Right ventricle myocardium inferior (tissue), 1 donor: ENCODE measurements at regions of chr14 and their contacts with region 1.

Region 1: DNA sequence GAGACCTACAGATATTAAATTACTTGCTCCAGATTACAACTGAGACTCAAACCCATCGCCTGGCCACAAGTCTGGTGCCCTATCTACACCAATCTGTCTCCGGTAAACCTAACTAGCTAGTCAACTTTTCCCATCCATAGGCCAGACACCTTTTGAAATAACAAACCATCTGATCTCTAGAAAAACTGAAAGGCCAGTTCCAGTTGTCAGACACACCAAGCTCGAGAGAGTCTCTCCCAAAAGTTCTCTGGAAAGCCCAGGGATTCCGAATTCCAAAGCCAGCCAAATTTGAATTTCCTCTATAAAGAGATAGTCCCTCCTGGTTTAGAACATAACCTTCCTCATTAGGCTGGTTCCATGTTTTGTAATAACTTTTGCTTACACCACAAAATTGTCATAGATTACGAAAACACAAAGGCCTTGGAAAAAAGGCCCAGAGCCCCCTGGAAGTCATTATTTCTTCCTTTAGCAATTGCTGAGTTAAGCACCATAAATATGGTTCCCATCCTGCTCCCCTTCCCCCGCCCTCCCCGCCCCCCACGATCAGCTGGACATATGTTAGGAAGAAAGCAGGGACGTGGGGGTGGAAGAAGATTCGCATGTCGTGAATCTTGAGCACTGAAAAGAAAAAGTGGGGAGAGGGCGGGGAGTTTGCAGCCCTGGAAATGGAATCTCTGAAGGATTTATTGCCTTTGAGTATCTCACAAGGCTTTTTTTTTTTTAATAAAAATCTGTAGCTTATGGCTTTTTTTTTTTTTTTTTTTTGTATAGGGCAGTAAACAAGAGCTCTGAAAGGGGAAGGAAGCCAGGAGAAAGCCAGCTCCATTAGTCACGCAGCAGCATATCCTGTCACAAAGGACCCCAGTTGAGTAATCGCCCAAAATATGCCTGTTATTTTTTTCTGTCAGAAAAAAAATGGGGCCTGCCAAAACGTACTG is 110.4 kb downstream of the ZFP36L1 start:
- DNase-seq: no peak
- ATAC-seq: peak; percentile 77

Region 2: GRCh38 chr14:67943947-67944346 is 738.5 kb before region 1 on chr14:
- intact Hi-C with region 1: loop called (anchors 5 kb)
- DNase-seq: no peak
- ATAC-seq: peak; percentile 59

Region 3: GRCh38 chr14:68598621-68599447 is 83.6 kb before region 1 on chr14:
- intact Hi-C with region 1: no loop called
- DNase-seq: peak; percentile 88
- ATAC-seq: peak; percentile 88

Region 4: DNA sequence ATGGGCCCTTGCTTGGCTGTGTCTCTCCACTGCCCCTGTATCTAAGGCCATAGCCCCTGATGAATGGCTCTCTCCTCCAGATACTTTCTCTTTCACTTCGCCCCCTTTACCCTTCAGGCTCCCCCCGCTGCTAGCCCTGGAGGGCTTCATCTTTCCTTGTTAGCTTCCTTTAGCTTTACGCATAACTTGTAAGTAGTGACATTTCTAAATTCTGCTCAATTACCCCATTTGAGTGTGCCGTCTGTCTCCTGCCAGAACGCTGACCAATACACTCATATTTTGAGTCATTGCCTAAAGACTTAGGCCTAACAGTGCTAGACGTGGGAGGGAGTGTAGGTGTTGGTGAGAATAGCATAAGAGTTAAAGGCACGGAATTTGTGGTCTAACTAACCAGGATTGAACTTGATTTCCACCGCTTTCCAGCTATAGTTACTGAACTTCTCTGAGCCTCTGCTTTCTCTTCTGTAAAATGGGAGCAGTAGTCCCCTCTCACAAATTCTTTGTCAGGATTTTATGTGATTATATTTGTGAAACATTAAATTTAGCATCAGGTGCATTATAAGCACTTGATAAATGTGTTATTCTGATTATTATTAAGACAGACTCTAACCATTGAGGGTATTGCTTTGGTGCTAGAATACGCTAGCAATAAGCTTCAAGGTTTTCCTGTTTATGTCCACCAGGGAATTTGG is 18.9 kb before region 1 on chr14:
- intact Hi-C with region 1: no loop called
- DNase-seq: no peak
- ATAC-seq: no peak

Region 5: DNA sequence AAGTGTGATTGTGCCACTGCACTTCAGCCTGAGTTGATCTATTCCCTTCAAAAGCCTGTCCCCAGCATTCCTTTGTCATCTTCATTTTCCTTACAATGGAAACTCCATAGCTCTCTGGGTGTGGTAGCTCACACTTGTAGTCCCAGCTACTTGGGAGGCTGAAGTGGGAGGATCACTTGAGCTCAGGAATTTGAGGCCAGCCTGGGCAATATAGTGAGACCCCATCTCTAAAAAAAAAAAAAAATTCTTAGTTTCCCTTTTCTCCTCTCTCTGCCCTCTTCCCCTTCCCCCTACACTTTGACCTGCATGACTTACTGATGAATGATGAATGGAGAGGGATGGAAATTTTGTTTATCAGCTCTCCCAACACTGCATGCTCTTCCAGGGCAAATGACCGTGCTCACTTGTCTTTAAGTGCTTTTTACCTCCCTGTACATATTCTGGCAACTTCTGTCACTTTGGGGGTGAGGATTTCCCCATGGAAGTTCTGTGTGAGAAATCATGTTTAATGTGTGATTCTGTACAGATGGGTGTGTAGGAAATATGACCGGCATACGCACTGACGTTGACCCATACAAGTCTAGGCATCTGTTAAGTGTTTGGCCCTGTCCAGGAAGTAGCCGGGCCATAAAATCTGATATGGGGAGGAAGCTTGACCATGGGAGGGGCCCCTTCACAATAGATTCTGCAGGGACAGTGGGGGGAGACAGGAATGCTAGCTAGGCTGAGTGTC is 45.0 kb after region 1 on chr14:
- intact Hi-C with region 1: loop called (anchors 5 kb)
- DNase-seq: no peak
- ATAC-seq: no peak

Region 6: GRCh38 chr14:68788996-68789820 is 106.8 kb after region 1 on chr14:
- intact Hi-C with region 1: loop called (anchors 2 kb)
- DNase-seq: peak; percentile 92
- ATAC-seq: peak; percentile 24